Calu3 (cell line): ENCODE measurements at regions of chr4 and their contacts with region 1.

Region 1: DNA sequence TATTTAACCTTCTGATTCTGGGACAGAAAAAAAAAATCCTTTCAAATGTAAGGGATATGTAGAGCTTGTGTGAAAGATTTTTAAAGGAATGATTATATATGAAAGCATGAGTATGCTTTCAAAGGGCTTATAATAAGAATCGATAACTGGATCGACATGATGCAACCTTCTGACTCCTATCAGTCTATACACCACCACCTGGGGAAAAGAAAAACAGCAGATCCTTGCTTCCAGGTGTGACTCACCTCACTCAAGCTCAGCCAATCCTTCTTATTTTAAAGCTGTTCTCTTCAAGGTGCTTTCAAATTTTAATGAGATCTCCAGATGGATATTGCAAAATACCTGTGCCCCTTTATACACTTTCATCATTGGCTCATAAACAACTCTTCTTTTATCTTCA is 102.1 kb upstream of the EDNRA start:
- DNase-seq: peak; percentile 27
- H3K4me3 Mint-ChIP-seq: no peak overlapping the region
- H3K27ac Mint-ChIP-seq: peak overlapping the region; percentile 47
- H3K4me1 Mint-ChIP-seq: no peaks in the 10 kb centered on the region
- H3K27me3 Mint-ChIP-seq: no peaks in the 10 kb centered on the region
- CTCF ChIP-seq: no peak

Region 2: GRCh38 chr4:147247579-147247978 is 131.2 kb before region 1 on chr4:
- CTCF ChIA-PET with region 1: no interaction called
- intact Hi-C with region 1: loop called (anchors 5 kb)
- DNase-seq: no peak
- H3K4me3 Mint-ChIP-seq: no peak overlapping the region
- H3K27ac Mint-ChIP-seq: peak overlapping the region; percentile 14
- H3K4me1 Mint-ChIP-seq: peaks cover 24% of the 10 kb centered on the region
- H3K27me3 Mint-ChIP-seq: no peaks in the 10 kb centered on the region
- CTCF ChIP-seq: no peak